ENCODE measurements at regions of chr11 and their contacts with region 1.

Region 1: DNA sequence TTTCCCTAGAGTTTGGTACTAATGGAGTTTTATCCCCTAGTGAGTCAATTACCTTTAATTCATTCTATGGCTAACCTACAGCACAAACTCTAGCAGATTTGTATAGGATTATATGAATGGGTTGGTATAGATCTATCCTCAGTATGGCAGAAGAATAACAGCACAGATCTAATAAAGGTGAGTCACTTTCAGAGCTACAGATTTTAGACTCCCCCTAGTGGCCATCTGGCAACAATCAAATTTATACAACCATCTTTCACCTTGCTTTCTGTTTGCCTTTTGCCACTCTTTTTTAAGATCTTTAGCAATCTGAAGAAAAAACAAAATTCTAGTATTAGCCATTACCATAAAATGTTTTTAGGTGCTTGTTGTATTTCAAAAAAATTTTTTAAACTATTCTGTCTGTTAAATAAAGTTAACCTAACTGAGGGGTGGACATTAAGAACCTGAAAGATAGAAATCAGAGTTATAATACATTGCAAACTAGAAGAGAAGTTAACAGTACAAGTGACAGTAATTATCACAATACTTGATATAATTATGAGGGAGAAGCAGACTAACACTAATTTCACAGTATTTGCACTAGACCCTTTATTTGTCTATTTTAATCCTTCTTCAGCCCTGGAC is 25.8 kb downstream of the DDIAS start:
- DNase-seq: no peak
- ATAC-seq: peak in 1 of 2 donors; percentile 51
- H3K4me3 ChIP-seq: no peak overlapping the region
- H3K27ac ChIP-seq: no peak overlapping the region
- H3K4me1 ChIP-seq: peaks cover 2% of the 10 kb centered on the region
- H3K27me3 ChIP-seq: no peaks in the 10 kb centered on the region

Region 2: GRCh38 chr11:82373781-82374542 is 553.4 kb before region 1 on chr11:
- intact Hi-C with region 1: no loop called
- DNase-seq: no peak
- ATAC-seq: no peak
- H3K4me3 ChIP-seq: no peak overlapping the region
- H3K27ac ChIP-seq: no peak overlapping the region
- H3K4me1 ChIP-seq: no peaks in the 10 kb centered on the region
- H3K27me3 ChIP-seq: no peaks in the 10 kb centered on the region

Region 3: DNA sequence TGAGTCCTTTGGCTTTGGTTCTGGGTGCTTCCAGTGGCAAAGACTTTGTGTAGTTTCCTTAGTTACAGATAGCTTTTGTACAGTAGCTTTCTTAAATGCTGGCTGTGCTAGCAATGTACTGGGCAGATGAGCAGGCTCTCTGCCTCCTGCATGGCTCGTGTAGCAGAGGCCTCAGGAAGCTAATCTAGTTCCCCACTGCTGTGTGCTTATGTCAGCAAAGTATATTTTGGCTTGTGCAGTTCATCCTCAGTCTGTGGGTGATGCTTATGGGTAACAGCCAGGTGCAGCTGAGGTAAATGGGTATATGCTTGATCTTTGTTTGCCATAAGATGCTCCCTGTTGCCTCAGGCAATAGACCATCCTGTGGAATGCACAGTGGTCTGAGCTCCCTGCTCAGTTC is 124.7 kb before region 1 on chr11:
- intact Hi-C with region 1: no loop called
- DNase-seq: no peak
- ATAC-seq: peak in 1 of 2 donors; percentile 24
- H3K4me3 ChIP-seq: no peak overlapping the region
- H3K27ac ChIP-seq: no peak overlapping the region
- H3K4me1 ChIP-seq: no peaks in the 10 kb centered on the region
- H3K27me3 ChIP-seq: no peaks in the 10 kb centered on the region

Region 4: GRCh38 chr11:82864268-82864667 is 63.1 kb before region 1 on chr11:
- intact Hi-C with region 1: no loop called
- DNase-seq: peak; percentile 46 to 75 (median 67)
- ATAC-seq: peak; percentile 77 to 89
- H3K4me3 ChIP-seq: no peak overlapping the region
- H3K27ac ChIP-seq: no peak overlapping the region
- H3K4me1 ChIP-seq: peaks cover 5% of the 10 kb centered on the region
- H3K27me3 ChIP-seq: no peaks in the 10 kb centered on the region

Region 5: DNA sequence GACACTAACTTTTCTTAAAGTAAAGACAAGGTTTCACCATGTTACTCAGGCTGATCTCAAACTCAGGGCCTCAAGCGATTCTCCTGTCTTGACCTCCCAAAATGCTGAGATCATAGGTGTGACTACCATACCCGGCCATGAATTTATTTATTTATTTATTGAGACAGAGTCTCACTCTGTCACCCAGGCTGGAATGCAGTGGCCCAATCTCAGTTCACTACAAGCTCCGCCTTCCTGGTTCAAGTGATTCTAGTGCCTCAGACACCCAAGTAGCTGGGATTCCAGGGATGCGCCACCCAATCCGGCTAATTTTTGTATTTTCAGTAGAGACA is 199.9 kb after region 1 on chr11:
- intact Hi-C with region 1: no loop called
- DNase-seq: no peak
- ATAC-seq: no peak
- H3K4me3 ChIP-seq: no peak overlapping the region
- H3K27ac ChIP-seq: no peak overlapping the region
- H3K4me1 ChIP-seq: no peaks in the 10 kb centered on the region
- H3K27me3 ChIP-seq: no peaks in the 10 kb centered on the region

Region 6: DNA sequence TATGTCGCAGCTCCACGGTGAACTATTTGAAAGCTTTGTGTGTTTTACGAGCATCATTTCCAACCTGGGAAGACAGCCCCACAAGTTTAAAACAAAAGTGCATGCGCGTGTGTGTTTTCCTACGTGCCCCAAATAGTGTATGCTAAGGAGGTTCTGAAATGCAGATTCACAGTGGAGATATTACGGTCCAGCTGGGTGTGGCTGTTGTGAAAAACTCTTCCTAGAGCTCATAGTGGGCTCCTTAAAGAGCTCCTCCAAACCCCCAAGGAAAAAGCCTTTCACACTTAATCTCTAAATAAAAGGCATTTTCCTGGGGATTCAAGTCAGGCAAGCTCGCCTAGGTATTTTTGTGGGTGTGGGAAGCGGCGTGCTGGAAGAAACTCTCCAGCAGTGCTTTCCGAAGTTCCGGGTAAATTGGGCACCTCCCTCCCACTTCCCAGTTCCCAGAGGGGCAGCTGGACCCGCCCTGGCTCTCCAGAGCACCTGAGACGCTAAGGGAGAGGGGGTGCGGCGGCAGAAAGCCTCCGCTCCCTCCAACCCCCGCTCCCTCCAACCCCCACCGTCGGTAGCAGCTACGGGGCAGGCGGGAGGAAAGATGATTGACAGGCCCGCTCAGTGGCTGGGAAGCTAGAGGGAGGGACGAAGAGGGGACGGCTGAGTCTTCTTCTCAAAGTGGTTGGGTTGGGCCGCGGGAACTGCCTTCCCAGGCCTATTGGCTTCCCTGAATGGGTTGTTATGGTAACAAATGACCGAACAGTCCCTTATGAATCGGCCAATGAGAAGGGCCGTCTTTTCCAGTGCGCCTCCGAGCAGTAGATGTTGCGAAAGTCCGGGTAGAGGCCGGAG is 229.0 kb after region 1 on chr11:
- intact Hi-C with region 1: loop called in 1 of 4 experiments (anchors 10 kb)
- DNase-seq: peak; percentile 98 to 100 (median 99)
- ATAC-seq: peak; percentile 97 to 98
- H3K4me3 ChIP-seq: peak overlapping the region; percentile 86
- H3K27ac ChIP-seq: peak overlapping the region; percentile 90
- H3K4me1 ChIP-seq: no peaks in the 10 kb centered on the region
- H3K27me3 ChIP-seq: no peaks in the 10 kb centered on the region

Measured in right cardiac atrium (tissue), 5 donors.